ENCODE measurements at regions of chr7 and their contacts with region 1.

Region 1: GRCh38 chr7:79806161-79806734 is 328.4 kb upstream of the GNAI1 start:
- ATAC-seq: peak in 3 of 8 experiments; percentile 23 to 59 (median 48)
- H3K4me3 ChIP-seq: no peak overlapping the region
- H3K27ac ChIP-seq: no peak overlapping the region
- H3K4me1 ChIP-seq: no peaks in the 10 kb centered on the region

Region 2: DNA sequence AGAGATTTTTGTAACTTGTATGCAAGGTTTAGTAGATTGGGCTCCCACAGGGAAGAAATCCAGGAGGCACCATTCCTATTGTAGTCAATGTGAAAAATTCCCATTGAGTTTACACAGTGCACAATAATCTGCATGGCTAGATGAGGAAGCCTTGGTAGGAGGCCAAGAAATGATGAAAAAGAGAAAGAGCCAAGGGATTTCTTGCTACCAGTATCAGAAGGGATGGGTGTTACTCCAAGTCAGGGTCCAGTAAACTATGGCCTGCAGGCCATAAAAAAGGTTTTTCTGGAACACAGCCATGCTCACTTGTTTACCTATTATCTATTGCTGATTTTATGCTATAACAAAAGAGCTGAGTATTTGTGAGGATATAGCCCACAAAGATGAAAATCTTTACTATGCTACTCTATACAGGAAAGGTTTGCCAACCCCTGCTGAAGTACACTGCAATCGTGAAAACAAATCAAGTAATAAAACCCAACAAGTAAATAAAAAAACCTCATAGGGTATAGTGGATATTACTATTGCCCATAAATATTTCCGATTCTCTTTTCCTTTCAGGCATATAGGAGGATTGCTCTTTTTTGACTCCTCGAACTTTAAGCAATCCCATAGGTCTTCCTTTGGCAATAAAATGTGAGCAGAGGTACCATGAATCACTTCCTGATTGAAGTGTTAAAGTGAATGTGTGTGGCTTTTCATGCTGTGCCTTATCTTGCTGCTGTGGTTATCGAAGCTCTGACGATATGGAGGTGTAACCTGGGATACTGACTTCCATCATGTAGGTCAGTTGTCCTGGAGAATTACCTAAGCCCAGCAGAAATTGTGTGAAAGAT is 96.5 kb before region 1 on chr7:
- in situ Hi-C with region 1: no loop called
- ATAC-seq: peak in 2 of 8 experiments; percentile 42 to 89
- H3K4me3 ChIP-seq: no peak overlapping the region
- H3K27ac ChIP-seq: no peak overlapping the region
- H3K4me1 ChIP-seq: no peaks in the 10 kb centered on the region

Region 3: DNA sequence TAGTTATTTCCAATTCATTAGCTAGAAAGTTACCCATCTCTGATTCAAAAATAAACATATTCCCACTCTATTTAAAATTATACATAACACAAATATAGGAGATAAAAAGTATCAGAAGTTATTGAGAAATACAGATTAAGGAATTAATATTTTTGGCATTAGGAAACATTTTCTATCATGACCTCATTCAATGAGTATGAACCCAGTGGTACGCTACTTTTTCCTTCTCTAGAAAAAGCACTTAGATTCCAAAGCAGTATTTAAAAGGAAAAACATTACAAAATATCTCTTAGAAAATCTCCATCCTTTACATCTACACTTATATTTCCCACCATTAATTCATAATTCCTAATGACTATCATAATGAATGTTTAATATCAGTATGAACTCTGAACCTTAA is 87.7 kb after region 1 on chr7:
- in situ Hi-C with region 1: no loop called
- ATAC-seq: no peak
- H3K4me3 ChIP-seq: no peak overlapping the region
- H3K27ac ChIP-seq: no peak overlapping the region
- H3K4me1 ChIP-seq: no peaks in the 10 kb centered on the region

Region 4: GRCh38 chr7:80027611-80028173 is 221.4 kb after region 1 on chr7:
- in situ Hi-C with region 1: loop called in 1 of 9 experiments (anchors 10 kb)
- ATAC-seq: peak in 2 of 8 experiments; percentile 25 to 46
- H3K4me3 ChIP-seq: no peak overlapping the region
- H3K27ac ChIP-seq: no peak overlapping the region
- H3K4me1 ChIP-seq: no peaks in the 10 kb centered on the region

Measured in motor neuron (in vitro differentiated cells).